HEK293 (cell line): ENCODE measurements at regions of chr7 and their contacts with region 1.

Region 1: DNA sequence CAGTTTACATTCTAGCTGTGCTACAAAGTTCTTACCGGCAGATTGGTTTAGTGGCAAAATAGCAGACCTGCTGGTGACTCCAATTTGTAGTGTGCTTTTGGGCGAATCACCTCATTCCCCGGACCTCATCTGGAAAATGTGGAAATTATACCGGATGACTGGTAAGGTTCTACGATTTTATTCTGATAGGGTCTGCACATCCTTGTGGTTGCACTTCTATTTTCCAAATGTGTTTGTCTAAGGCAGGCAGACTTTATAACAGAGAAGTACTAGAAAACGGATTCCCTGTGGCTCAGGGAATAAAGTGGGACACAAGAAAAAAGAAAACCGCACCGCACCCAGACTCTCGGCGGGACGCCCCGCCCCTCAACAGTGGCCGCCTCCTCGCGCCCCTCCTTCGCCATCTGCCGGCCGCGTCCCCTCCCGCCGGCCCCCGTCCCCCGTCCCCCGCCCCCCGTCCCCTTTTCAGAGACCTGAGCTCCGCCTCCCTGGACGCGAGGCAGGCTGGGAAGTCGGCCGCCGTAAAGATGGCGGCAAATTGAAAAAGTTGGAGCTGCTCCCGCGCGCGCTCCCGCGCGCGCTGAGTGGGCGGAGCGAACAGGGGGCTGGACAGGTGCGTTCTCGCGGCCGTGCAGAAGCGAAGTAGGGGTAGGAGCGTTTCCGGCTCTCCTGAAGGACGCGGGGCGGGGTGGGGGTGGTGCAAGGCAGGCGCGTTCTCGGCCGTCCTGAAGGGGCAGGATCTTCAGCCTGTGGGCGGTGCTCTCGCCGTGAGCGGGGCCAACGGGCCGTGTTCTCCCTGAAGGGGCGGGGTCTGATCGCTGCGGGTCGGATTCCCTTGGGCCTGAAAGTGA is 531 bp upstream of the CCM2 start:
- H3K4me3 ChIP-seq: peak overlapping the region; percentile 58
- H3K27ac ChIP-seq: peak overlapping the region; percentile 75
- H3K4me1 ChIP-seq: peaks cover 5% of the 10 kb centered on the region; the same call in 1 of the 2 replicates
- CTCF ChIP-seq: no peak

Region 2: DNA sequence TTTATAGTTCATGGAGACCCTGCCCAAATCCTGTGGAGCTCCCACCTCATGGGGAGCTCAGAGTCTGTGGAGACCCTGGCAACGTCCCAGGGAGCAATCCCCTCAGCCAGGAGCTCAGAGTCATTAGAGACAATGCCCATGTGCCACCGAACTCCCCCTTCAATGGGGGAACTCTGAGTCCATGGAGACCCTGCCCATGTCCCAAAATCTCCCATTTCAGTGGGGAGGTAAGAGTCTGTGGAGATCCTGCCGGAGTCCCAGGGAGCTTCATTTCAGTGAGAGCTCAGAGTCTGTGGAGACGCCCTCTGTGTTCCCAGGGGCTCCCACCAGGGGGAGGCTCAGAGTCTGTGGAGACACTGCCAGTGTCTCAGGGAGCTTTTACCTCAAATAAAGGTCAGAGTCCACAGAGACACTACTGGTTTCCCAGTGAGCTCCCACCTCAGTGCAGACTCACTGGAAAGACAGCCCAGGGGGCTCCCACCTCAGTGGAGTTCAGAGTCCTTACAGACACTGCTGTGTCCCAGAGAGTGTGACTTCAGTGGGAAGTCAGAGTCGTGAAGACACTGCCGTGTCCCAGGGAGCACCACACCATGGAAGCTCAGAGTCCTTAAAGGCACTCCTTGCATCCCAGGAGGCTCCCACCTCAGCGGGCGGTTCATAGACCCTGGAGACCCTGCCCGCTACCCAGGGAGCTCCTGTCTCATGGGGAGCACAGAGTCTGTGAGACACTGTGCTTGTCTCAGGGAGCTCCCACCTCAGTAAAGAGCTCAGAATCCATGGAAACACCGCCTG is 25.7 kb before region 1 on chr7:
- CTCF ChIA-PET with region 1: interaction called, 14 read pairs
- POLR2A ChIA-PET with region 1: interaction called, 21 read pairs
- H3K4me3 ChIP-seq: no peak overlapping the region
- H3K27ac ChIP-seq: no peak overlapping the region
- H3K4me1 ChIP-seq: no peaks in the 10 kb centered on the region
- CTCF ChIP-seq: no peak

Region 3: DNA sequence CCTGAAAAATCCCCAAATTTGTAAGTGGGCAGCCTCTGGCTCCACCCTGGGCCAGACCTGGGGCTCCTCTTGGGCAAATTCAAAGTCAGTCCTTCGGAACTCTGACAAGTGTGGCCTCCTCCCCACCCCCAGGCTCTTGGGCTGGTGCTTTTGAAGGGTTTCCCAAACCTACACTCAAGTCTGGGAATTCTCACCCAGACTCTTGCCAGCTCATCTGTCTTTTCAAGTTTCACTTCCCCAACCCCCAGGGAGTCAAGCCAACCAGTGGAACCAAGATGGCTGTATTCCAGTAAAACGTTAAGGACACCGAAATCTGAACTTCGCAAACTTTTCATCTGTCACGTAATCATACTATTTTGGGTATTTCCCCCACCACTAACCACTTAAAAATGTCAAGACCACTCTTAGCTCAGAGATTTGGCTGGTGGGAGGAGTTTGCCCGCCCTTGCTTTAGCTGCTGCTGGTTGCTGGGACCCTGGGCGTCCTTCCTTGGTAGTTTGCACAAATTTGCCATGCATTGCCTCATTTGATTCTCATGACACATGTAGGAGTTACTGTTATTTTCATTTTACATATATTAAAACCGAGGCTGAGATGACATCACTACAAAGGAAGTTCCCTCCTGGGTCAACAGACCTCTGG is 19.0 kb before region 1 on chr7:
- CTCF ChIA-PET with region 1: interaction called, 3 read pairs
- POLR2A ChIA-PET with region 1: interaction called, 24 read pairs
- H3K4me3 ChIP-seq: no peak overlapping the region
- H3K27ac ChIP-seq: no peak overlapping the region
- H3K4me1 ChIP-seq: no peaks in the 10 kb centered on the region
- CTCF ChIP-seq: no peak

Region 4: DNA sequence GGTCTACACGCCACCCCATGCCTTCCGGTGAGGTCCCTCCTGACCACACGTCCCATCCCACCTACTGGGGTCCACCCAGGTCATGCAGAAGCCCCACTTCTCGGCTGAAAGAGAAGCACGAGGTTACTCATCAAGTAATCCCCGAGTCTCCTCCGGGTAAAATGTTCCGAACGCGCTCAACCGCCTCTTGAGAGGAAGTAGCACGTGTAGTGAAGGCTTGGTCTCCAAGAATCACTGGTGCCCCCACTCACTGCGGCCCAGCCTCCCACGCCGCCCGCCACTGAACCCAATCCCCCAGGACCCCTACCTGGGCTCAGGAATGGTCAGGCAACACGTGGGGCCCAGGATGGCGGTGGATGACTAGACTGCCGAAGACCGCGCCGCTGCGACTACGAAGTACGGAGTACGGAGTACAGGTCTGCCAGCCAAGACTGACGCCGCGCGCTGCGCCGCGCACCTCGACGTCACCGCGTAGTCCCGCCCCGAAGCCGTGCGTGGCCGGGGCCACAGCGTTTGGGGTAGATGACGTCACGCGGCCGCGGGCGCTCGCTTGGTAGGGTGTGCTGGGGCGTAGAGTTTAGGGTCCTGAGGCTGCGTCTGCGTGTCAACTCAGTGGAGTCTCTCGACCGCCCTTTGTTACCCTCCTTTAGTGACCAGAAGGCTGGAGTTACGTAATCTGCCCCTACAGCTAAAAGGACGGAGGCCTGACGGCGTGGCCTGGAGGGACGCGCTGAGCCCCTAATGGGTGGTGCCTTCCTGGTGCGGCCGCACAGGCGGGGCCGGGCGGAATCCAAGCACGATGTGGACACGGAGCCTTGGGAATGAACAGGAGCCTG is 13.0 kb before region 1 on chr7:
- CTCF ChIA-PET with region 1: interaction called, 3 read pairs
- POLR2A ChIA-PET with region 1: interaction called, 24 read pairs
- H3K4me3 ChIP-seq: peak overlapping the region; percentile 79
- H3K27ac ChIP-seq: peak overlapping the region; percentile 98
- H3K4me1 ChIP-seq: peaks cover 5% of the 10 kb centered on the region
- CTCF ChIP-seq: no peak

Region 5: DNA sequence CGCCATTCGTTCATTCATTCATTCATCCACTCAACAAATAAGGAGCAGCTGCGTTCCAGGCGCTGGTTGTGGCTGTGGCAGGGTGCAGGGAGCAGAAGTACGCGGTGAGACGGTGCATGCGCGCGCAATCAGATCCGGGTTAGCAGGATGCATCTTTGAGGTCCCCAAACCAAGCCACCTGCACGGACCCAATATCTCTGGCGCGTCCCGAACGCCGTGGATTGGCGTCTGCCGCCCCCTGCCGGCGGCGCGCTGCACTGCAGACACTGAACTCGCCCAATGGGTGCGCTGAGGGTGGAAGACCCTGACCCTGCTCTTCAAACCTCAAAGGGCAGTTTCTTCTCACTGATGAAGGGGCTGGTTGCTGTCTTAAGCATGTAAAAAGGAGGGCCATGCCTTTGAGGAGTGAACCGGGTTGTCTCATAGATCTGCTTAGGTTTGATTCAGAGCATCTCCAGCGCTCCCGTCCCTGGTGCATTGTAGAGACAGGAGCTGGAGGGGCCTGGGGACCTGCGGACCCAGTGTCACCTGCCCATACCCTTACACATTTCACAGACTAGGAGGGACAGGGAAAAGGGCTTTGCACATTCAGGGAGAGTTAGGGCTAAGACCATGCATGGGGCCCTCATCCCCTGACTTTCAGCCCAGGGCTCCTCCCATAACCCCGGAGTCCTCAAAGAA is 260.6 kb after region 1 on chr7:
- CTCF ChIA-PET with region 1: no interaction called
- POLR2A ChIA-PET with region 1: no interaction called
- H3K4me3 ChIP-seq: no peak overlapping the region
- H3K27ac ChIP-seq: no peak overlapping the region
- H3K4me1 ChIP-seq: no peaks in the 10 kb centered on the region
- CTCF ChIP-seq: peak; percentile 74